ENCODE measurements at regions of chr10 and their contacts with region 1.

Region 1: DNA sequence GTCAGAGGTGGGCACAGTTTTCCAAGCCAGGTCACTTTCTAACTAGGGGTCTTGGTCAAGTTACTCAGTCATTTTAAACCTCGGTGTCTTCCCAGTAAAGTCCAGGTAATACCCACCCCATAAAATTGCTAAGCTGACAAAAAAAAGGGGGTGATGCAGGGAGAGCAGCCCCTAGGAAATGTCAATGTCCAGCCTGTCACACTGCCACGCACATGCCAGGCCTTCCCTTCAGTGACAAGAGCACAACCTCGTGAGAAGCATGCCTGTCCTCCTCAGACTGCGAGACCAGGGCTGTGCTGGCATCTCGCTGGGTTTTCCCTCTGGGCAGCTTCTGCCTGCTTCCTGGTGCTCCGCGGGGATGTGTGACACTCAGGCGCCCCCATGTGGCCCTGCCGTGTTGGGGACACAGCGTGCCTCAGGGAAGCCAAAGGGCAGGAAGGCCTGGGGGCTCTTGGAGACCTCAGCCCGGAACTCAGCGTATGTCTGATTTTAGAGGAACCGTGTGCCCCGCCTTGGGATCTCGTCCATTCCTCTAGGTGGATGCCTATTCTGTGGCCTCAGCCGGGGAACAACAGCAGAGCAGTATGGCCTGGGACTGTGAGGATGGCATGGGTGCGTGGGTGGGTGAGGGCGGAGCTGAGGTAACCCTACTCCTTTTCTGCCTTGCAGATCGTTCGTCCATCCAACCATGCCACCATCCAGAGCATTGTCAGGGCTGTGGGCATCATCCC is 10.2 kb upstream of the GDF2 start:
- DNase-seq: peak; percentile 85

Region 2: DNA sequence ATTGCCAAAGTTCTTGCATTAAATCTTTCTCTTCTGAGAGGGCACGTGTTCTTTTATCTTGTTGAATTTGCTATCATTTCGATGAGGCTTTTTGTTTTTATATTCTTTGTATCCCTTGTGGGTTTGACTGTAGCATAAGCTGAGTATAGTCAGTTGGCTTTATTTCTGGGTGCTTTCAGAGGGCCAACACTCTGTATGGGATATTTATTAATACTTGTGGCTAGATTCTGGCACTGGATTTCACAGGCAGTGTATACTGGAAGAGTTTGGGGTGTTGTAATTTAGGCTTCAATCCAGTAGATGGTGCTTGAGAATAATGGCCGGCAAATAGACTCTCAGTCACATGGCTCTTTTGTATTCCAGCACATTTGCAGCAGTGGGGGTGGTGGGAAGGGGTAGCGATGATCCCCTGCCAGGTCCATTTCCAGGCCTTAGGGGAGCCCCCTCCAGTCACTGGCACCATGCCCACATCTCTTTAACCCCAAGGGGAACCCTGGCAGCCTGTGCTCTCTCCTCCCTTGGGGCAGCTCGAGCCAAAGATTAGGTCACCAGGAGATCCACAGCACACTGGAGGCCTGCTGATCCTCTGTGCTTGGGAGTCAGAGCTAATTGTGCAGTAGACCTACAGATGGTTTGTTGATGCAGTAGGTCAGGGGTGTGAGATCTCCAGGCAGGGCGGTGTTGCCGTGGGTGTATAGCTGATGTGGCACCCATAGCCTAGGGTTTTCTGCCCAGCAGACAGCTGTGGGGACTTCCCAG is 319.1 kb before region 1 on chr10:
- intact Hi-C with region 1: loop called (anchors 5 kb)
- DNase-seq: no peak

Region 3: DNA sequence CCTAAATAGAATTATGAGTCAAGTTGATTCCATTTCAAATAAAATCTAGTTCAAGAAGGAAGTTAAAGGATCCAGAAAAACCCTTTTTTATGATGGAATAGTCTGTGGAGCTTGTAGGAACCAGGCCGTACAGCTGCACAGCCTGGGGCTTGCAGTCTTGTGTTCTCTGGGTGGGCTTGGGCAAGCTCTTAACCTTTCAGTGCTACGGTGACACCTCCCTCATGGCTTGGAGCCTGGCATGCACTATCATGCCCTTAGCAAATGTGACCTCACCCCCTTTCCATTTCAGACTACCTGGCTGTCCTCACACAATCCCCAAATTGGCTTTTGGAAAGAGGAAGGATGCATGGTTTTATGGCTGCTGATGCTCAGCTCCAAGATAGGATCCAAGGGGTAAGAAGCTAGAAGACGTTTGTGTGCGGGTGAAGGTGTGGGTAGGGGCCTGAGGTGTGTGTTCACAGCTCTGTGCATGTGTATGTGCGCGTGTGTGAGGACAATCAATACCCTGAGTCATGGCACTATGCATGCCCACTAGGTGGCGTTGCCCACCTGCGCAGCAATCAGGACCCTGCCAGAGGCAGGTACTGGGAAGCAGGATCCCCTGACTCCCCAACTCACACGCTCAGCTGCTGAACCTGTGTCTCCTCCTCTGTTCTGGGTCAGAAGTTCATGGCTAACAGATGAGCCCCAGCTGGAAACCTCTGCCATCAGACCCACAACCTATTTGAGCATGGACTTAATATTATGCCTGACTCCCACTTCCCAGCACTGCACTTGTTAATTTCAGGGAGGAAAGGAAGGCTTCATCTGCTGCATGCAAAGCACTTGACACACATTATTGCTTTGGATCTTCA is 287.5 kb before region 1 on chr10:
- intact Hi-C with region 1: loop called (anchors 10 kb)
- DNase-seq: peak; percentile 80

Region 4: GRCh38 chr10:47047671-47048525 is 264.2 kb before region 1 on chr10:
- intact Hi-C with region 1: loop called (anchors 2 kb)
- DNase-seq: no peak